ENCODE measurements at regions of chr16 and their contacts with region 1.

Region 1: DNA sequence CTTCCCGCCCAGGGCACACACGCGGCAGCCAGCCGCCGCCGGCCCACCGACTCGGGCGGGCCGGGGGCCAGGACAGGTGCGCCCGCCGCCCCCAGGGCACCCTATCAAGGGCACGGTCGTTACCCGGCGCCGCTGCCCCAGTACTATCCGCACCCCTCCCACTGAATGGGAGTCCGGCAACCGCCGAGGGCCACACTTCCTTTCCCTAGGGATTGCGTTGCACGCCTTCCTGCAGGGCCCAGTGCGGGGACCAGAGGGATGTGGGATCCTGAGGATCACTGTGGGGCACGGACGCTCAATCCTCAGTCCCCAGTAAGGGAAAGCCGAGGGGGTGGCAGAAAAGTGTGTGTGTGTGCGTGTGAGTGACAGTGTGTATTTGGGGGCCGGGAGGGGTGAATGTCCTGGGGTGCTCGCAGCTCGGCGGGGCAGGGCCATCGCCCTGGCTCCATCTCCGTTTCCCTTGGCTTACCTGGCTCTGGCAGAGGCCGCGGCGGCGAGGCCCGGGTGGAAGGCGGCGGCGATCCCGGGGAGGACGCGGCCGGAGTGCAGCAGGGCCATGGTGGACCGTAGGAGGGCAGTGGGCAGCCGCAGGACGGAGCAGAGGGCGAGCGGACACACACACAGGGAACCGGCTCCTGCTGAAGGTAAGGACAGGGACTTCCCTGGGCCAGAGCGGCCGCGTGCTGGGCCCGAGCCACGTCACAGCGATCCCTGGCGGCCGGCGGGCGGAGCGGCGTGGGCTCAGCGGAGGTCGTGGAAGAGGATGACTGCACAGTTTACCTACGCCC is at the start of gene GOT2:
- DNase-seq: peak; percentile 87
- ATAC-seq: peak; percentile 96 to 99
- total RNA-seq, gene GOT2: 270 TPM

Region 2: DNA sequence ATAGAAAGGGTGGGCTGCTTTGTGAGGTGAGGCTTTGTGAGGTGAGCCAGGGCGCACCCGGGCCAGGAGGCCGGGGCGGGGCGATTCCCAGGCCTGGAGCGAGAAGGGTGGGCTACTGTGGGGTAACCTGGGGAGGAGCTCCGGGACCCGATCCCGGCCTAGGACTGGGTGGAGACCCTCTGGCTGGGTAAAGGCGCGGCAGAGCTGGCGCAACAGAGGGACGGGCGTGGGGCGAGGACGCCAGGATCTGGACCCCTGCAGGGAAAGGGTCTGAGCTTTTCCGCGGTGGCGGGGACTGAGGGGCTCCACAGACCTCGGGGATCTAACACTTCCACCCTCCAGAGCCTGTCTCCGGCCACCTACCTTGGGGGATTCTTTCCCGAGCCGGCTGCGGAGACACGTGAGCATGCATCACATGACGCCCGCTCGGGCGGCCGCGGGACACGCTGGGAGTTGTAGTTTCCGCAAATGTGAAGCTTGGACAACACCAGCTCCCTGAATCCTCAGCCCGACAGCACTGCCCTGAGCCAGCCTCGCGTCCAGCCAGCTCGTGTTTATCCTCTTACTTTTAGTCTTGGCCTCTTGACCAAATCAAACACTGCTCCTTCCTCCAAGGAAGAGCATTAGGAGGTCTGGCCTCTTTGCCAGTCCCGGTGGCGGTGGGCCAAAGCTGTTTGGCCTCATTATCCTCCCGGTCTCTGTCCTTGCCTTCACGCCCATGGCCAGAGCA is 49.3 kb before region 1 on chr16 and contains the start of gene SLC38A7:
- intact Hi-C with region 1: loop called in 1 of 2 experiments (anchors 10 kb)
- DNase-seq: peak; percentile 92
- ATAC-seq: peak; percentile 97
- total RNA-seq, gene SLC38A7: 20.8 to 21.4 TPM

Measured in left cardiac atrium (tissue), 4 donors.